T-cell (primary cell): ENCODE measurements at regions of chr12 and their contacts with region 1.

Region 1: GRCh38 chr12:7872566-7873319 is at the start of gene SLC2A14:
- DNase-seq: no peak
- ATAC-seq: no peak
- H3K4me3 ChIP-seq: peak within 1 kb of the TSS in 1 of 2 donors; percentile 36
- H3K4me3 Mint-ChIP-seq: peak within 1 kb of the TSS in 1 of 3 donors; percentile 46
- H3K27ac ChIP-seq: no peak within 1 kb of the TSS
- H3K27ac Mint-ChIP-seq: no peak within 1 kb of the TSS
- H3K4me1 ChIP-seq: peaks cover 0 to 8% of the 10 kb centered on the region in 2 experiments
- H3K4me1 Mint-ChIP-seq: peaks cover 0 to 7% (median 6%) of the 10 kb centered on the region in 3 donors
- H3K27me3 ChIP-seq: peaks cover 4 to 23% of the 10 kb centered on the region in 2 experiments
- H3K27me3 Mint-ChIP-seq: peaks cover 19 to 30% of the 10 kb centered on the region in 2 donors
- total RNA-seq, gene SLC2A14: 0.10 to 2.5 (median 0.21) TPM

Region 2: GRCh38 chr12:7892186-7892980 is 19.6 kb after region 1 on chr12:
- CTCF ChIA-PET with region 1: interaction called in 1 of 2 experiments, 10 read pairs
- POLR2A ChIA-PET with region 1: no interaction called
- DNase-seq: no peak
- ATAC-seq: no peak
- H3K4me3 ChIP-seq: no peak overlapping the region
- H3K4me3 Mint-ChIP-seq: no peak overlapping the region
- H3K27ac ChIP-seq: no peak overlapping the region
- H3K27ac Mint-ChIP-seq: no peak overlapping the region
- H3K4me1 ChIP-seq: no peaks in the 10 kb centered on the region
- H3K4me1 Mint-ChIP-seq: no peaks in the 10 kb centered on the region
- H3K27me3 ChIP-seq: no peaks in the 10 kb centered on the region
- H3K27me3 Mint-ChIP-seq: peaks cover 2 to 13% of the 10 kb centered on the region in 2 donors

Region 3: DNA sequence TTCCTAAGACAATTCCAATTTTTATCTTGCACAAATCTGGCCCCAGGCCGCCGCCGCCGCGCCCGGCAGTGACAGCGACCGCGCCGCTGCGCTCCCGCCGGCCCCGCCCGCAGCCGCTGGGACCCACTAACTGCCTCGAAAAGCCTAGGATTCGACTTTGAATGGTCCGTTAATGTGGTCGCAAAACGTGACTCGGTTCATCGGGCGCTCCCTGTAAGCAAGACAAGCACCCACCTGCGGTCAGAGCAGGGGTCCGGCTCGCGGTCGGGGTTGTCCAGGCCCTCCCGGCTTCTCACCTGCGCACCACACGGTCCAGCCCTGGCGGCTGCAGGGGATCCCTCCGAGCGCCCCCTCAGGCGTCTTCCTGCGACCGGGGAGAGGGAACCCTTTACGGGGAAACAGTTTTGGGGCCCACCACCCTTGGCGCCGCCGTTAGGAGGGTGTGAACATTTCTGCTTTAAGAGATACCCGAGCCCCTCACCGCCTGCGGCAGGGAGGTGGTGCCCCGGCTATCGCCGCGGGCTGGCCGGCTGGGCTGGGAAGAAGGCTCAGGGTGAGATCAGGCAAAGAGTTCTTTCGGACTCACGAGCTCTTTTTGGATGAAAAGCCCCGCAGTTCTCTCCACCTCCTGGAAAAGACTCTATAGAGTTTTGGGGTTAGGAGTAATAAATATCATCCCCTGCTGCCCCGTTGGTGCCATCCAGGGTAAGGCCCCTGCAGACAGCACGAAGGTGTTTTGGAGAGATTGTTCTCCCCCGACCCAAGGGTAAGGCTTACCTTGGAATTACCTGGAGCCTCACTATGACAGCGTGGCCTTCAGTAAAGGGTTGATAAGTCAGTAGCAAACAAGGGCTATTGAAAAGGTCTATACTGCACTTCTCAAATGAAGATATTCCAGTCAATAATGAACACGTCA is 146.2 kb after region 1 on chr12:
- CTCF ChIA-PET with region 1: no interaction called
- POLR2A ChIA-PET with region 1: no interaction called
- DNase-seq: peak in 8 of 35 experiments; percentile 5 to 32 (median 17)
- ATAC-seq: peak; percentile 64 to 72 (median 71)
- H3K4me3 ChIP-seq: peak overlapping the region; percentile 49 to 52
- H3K4me3 Mint-ChIP-seq: peak overlapping the region; percentile 37 to 72 (median 60)
- H3K27ac ChIP-seq: no peak overlapping the region
- H3K27ac Mint-ChIP-seq: no peak overlapping the region
- H3K4me1 ChIP-seq: peaks cover 0 to 13% of the 10 kb centered on the region in 2 experiments
- H3K4me1 Mint-ChIP-seq: peaks cover 0 to 7% (median 5%) of the 10 kb centered on the region in 3 donors
- H3K27me3 ChIP-seq: peaks cover 2 to 29% of the 10 kb centered on the region in 2 experiments
- H3K27me3 Mint-ChIP-seq: peaks cover 23 to 25% of the 10 kb centered on the region in 2 donors